A549 (cell line): ENCODE measurements at regions of chr9 and their contacts with region 1.

Region 1: GRCh38 chr9:18442629-18443491 is 31.1 kb upstream of the ADAMTSL1 start:
- DNase-seq: peak; percentile 55 to 77
- ATAC-seq: peak; percentile 96 to 98
- H3K4me3 ChIP-seq: no peak overlapping the region
- H3K27ac ChIP-seq: no peak overlapping the region
- H3K4me1 ChIP-seq: no peaks in the 10 kb centered on the region
- CTCF ChIP-seq: peak; percentile 84
- EP300 ChIP-seq: no peak
- POLR2A ChIP-seq: no peak
- RAD21 ChIP-seq: peak; percentile 64 to 69

Region 2: GRCh38 chr9:18245911-18246310 is 196.9 kb before region 1 on chr9:
- CTCF ChIA-PET with region 1: interaction called, 17 read pairs
- POLR2A ChIA-PET with region 1: no interaction called
- DNase-seq: no peak
- ATAC-seq: no peak
- H3K4me3 ChIP-seq: no peak overlapping the region
- H3K27ac ChIP-seq: no peak overlapping the region
- H3K4me1 ChIP-seq: no peaks in the 10 kb centered on the region
- CTCF ChIP-seq: no peak
- EP300 ChIP-seq: no peak
- POLR2A ChIP-seq: no peak
- RAD21 ChIP-seq: no peak

Region 3: DNA sequence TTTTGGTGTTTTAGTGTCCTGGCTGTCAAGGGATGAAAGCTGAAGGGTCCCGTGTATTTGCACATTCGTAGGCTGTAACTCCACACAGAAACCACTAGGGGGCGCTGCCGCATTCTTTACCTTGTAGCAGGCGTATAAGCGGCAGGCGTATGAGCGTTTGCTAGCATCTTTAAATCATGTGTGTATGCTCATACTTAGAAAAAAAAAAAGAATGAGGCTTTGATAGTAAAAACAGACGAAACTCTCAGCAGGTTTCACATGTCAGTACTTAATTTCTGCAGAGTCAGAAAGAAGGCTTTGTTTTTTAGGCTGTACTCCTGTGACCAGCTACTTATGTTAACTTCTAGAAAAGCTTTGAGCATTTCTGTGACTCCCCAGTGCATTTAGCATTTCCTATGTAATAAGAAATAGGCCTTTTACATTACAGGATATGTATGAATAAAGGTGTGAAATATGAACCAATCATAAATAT is 187.7 kb before region 1 on chr9:
- CTCF ChIA-PET with region 1: interaction called, 122 read pairs
- POLR2A ChIA-PET with region 1: no interaction called
- DNase-seq: peak; percentile 50 to 72
- ATAC-seq: peak; percentile 84 to 93
- H3K4me3 ChIP-seq: no peak overlapping the region
- H3K27ac ChIP-seq: no peak overlapping the region
- H3K4me1 ChIP-seq: no peaks in the 10 kb centered on the region
- CTCF ChIP-seq: peak; percentile 94
- EP300 ChIP-seq: no peak
- POLR2A ChIP-seq: no peak
- RAD21 ChIP-seq: peak; percentile 87 to 89

Region 4: DNA sequence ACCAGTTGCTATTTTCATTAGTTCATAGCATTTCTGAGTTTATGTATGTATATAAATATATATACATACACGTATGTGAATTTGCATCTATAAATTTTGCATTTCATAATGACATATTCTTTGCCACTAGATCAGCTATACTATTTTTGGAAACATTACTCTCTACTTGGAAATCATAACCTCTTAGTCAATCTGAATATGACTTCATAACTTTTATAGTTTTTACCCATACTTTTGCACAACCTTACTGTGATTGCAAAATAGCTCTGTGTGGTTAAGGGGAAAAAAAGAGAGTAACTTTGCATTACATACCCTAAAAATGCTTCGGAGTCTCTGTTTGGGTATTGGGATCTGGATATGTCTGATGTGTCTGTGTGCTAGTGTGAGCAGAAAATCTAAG is 13.8 kb before region 1 on chr9:
- CTCF ChIA-PET with region 1: interaction called, 20 read pairs
- POLR2A ChIA-PET with region 1: no interaction called
- DNase-seq: no peak
- ATAC-seq: no peak
- H3K4me3 ChIP-seq: no peak overlapping the region
- H3K27ac ChIP-seq: no peak overlapping the region
- H3K4me1 ChIP-seq: no peaks in the 10 kb centered on the region
- CTCF ChIP-seq: no peak
- EP300 ChIP-seq: no peak
- POLR2A ChIP-seq: no peak
- RAD21 ChIP-seq: no peak

Region 5: GRCh38 chr9:18459958-18460584 is 17.2 kb after region 1 on chr9:
- CTCF ChIA-PET with region 1: interaction called, 33 read pairs
- POLR2A ChIA-PET with region 1: no interaction called
- DNase-seq: peak in 1 of 2 experiments; percentile 44
- ATAC-seq: peak; percentile 42 to 54; a peak in 4 of 6 replicates
- H3K4me3 ChIP-seq: no peak overlapping the region
- H3K27ac ChIP-seq: no peak overlapping the region
- H3K4me1 ChIP-seq: 0 out of 3 replicates have a peak, but pooled peaks cover 4% of the 10 kb centered on the region
- CTCF ChIP-seq: no peak
- EP300 ChIP-seq: no peak
- POLR2A ChIP-seq: no peak
- RAD21 ChIP-seq: no peak

Region 6: GRCh38 chr9:18485714-18486113 is 42.9 kb after region 1 on chr9:
- CTCF ChIA-PET with region 1: interaction called, 12 read pairs
- POLR2A ChIA-PET with region 1: interaction called, 3 read pairs
- DNase-seq: no peak
- ATAC-seq: no peak
- H3K4me3 ChIP-seq: no peak overlapping the region
- H3K27ac ChIP-seq: no peak overlapping the region
- H3K4me1 ChIP-seq: no peaks in the 10 kb centered on the region
- CTCF ChIP-seq: no peak
- EP300 ChIP-seq: no peak
- POLR2A ChIP-seq: no peak
- RAD21 ChIP-seq: no peak